Caco-2 (cell line): ENCODE measurements at regions of chr6 and their contacts with region 1.

Region 1: DNA sequence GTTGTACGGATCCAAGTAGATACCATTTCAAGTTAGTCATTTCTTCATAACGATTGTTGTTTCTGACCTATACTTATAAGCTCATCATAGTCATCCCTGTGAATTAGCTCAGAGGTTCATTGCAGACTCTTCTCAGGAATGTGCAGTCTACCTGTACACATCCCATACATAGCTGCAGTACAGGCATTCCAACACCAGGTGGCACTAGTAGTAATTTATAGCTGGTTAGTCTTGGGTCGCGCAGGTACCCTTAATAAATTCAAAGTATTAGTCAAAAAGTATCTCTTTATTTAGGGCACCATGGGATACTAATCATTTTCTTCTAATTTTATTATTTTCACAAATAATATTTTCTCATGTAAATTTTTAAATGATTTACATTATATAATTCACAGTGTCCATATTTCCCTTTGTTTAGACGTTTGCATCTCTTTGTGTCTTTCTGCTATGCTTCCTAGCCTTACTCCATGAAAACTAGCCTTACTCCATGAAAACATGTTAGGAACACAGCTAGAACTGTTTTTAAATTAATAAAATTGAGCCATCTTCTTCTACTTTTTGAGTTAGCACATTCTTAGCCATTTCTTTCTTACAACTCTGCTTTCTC is 128.6 kb upstream of the FAM83B start:
- DNase-seq: peak; percentile 78 to 82
- H3K4me3 ChIP-seq: no peak overlapping the region
- H3K4me3 Mint-ChIP-seq: no peak overlapping the region
- H3K27ac Mint-ChIP-seq: no peak overlapping the region
- H3K4me1 ChIP-seq: no peaks in the 10 kb centered on the region
- H3K4me1 Mint-ChIP-seq: peaks cover 19% of the 10 kb centered on the region
- H3K27me3 ChIP-seq: no peaks in the 10 kb centered on the region
- H3K27me3 Mint-ChIP-seq: no peaks in the 10 kb centered on the region
- CTCF ChIP-seq: peak; percentile 69 to 74

Region 2: GRCh38 chr6:54515013-54515412 is 202.9 kb before region 1 on chr6:
- CTCF ChIA-PET with region 1: no interaction called
- POLR2A ChIA-PET with region 1: no interaction called
- intact Hi-C with region 1: loop called (anchors 10 kb)
- DNase-seq: peak in 1 of 2 experiments; percentile 7
- H3K4me3 ChIP-seq: no peak overlapping the region
- H3K4me3 Mint-ChIP-seq: no peak overlapping the region
- H3K27ac Mint-ChIP-seq: no peak overlapping the region
- H3K4me1 ChIP-seq: no peaks in the 10 kb centered on the region
- H3K4me1 Mint-ChIP-seq: no peaks in the 10 kb centered on the region
- H3K27me3 ChIP-seq: no peaks in the 10 kb centered on the region
- H3K27me3 Mint-ChIP-seq: no peaks in the 10 kb centered on the region
- CTCF ChIP-seq: no peak

Region 3: GRCh38 chr6:54665278-54665677 is 52.7 kb before region 1 on chr6:
- CTCF ChIA-PET with region 1: no interaction called
- POLR2A ChIA-PET with region 1: no interaction called
- intact Hi-C with region 1: no loop called
- DNase-seq: no peak
- H3K4me3 ChIP-seq: no peak overlapping the region
- H3K4me3 Mint-ChIP-seq: no peak overlapping the region
- H3K27ac Mint-ChIP-seq: no peak overlapping the region
- H3K4me1 ChIP-seq: no peaks in the 10 kb centered on the region
- H3K4me1 Mint-ChIP-seq: no peaks in the 10 kb centered on the region
- H3K27me3 ChIP-seq: no peaks in the 10 kb centered on the region
- H3K27me3 Mint-ChIP-seq: no peaks in the 10 kb centered on the region
- CTCF ChIP-seq: no peak

Region 4: DNA sequence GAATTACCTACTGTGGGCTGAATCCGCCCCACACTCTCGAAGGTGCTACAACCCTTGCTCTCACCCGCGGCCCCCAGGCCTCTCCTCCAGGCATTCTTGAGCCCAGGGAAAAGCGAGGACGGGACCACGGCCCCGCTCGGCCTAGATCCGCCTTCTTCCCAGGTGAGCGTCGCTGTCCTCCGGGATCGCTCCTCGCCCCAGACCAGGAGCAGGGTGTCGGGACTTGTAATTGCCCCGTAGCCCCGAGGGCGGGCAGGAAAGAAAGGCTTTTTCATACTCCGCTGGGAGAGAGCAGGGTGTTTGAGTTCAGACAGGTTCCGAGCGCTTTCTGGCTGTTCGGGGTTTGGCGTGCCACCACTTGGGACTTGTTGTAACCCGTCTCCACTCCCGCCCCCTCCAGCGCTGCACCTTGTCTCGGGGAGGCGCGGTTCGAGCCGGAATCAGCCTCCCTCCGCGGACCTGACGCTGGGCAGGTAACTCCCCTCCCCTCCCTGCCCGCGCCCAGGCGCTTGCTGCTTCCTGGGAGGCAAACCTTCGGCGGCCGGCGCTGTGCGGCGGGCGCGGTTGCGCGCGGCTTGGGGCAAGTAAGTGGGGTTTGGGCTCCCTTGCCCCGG is 128.4 kb after region 1 on chr6 and contains the start of gene FAM83B:
- CTCF ChIA-PET with region 1: interaction called, 4 read pairs
- POLR2A ChIA-PET with region 1: no interaction called
- intact Hi-C with region 1: loop called (anchors 2 kb)
- DNase-seq: peak; percentile 84 to 87
- H3K4me3 ChIP-seq: peak within 1 kb of the TSS; percentile 43
- H3K4me3 Mint-ChIP-seq: peak within 1 kb of the TSS; percentile 98
- H3K27ac Mint-ChIP-seq: peak within 1 kb of the TSS; percentile 93
- H3K4me1 ChIP-seq: peaks cover 22% of the 10 kb centered on the region
- H3K4me1 Mint-ChIP-seq: peaks cover 33% of the 10 kb centered on the region
- H3K27me3 ChIP-seq: no peaks in the 10 kb centered on the region
- H3K27me3 Mint-ChIP-seq: no peaks in the 10 kb centered on the region
- CTCF ChIP-seq: no peak
- total RNA-seq, gene FAM83B: 16.9 and 21.1 TPM in 2 replicates

Region 5: DNA sequence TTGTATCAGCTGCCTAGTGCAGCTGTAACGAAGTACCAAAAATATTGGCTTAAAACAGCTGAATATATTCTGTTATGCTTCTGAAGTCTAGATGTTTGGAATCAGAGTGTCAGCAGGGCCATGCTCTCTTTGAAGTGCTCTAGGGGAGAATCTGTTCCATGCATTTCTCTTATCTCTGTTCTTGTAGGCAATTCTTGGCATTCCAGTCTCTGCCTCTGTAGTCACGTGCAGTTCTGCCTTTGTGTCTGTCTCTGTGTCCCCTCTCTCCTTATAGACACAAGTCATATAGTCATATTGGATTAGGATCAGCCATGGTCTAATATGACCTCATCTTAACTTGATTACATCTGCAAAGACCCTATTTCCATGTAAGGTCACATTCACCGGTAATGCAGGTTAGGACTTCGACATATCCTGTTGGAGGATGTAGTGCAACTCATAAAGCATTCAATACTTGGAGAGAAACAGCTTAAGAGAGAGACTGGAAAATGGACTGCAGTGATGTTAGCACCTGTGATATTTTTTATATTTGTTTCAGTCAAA is 147.2 kb after region 1 on chr6:
- CTCF ChIA-PET with region 1: no interaction called
- POLR2A ChIA-PET with region 1: no interaction called
- intact Hi-C with region 1: loop called (anchors 5 kb)
- DNase-seq: peak; percentile 69 to 79
- H3K4me3 ChIP-seq: no peak overlapping the region
- H3K4me3 Mint-ChIP-seq: peak overlapping the region; percentile 54
- H3K27ac Mint-ChIP-seq: peak overlapping the region; percentile 80
- H3K4me1 ChIP-seq: peaks cover 84% of the 10 kb centered on the region
- H3K4me1 Mint-ChIP-seq: peaks cover 32% of the 10 kb centered on the region
- H3K27me3 ChIP-seq: no peaks in the 10 kb centered on the region
- H3K27me3 Mint-ChIP-seq: no peaks in the 10 kb centered on the region
- CTCF ChIP-seq: no peak

Region 6: GRCh38 chr6:54992789-54993188 is 274.8 kb after region 1 on chr6:
- CTCF ChIA-PET with region 1: interaction called, 4 read pairs
- POLR2A ChIA-PET with region 1: no interaction called
- intact Hi-C with region 1: loop called (anchors 1 kb)
- DNase-seq: peak in 1 of 2 experiments; percentile 18
- H3K4me3 ChIP-seq: no peak overlapping the region
- H3K4me3 Mint-ChIP-seq: no peak overlapping the region
- H3K27ac Mint-ChIP-seq: no peak overlapping the region
- H3K4me1 ChIP-seq: peaks cover 5% of the 10 kb centered on the region; the same call in 1 of the 2 replicates
- H3K4me1 Mint-ChIP-seq: no peaks in the 10 kb centered on the region
- H3K27me3 ChIP-seq: no peaks in the 10 kb centered on the region
- H3K27me3 Mint-ChIP-seq: no peaks in the 10 kb centered on the region
- CTCF ChIP-seq: peak; percentile 45 to 51

Region 7: GRCh38 chr6:55069132-55069781 is 351.3 kb after region 1 on chr6:
- CTCF ChIA-PET with region 1: interaction called, 14 read pairs
- POLR2A ChIA-PET with region 1: no interaction called
- intact Hi-C with region 1: loop called (anchors 1 kb)
- DNase-seq: peak in 1 of 2 experiments; percentile 55
- H3K4me3 ChIP-seq: no peak overlapping the region
- H3K4me3 Mint-ChIP-seq: no peak overlapping the region
- H3K27ac Mint-ChIP-seq: no peak overlapping the region
- H3K4me1 ChIP-seq: no peaks in the 10 kb centered on the region
- H3K4me1 Mint-ChIP-seq: peaks cover 6% of the 10 kb centered on the region
- H3K27me3 ChIP-seq: no peaks in the 10 kb centered on the region
- H3K27me3 Mint-ChIP-seq: peaks cover 4% of the 10 kb centered on the region
- CTCF ChIP-seq: peak; percentile 60 to 74

Region 8: DNA sequence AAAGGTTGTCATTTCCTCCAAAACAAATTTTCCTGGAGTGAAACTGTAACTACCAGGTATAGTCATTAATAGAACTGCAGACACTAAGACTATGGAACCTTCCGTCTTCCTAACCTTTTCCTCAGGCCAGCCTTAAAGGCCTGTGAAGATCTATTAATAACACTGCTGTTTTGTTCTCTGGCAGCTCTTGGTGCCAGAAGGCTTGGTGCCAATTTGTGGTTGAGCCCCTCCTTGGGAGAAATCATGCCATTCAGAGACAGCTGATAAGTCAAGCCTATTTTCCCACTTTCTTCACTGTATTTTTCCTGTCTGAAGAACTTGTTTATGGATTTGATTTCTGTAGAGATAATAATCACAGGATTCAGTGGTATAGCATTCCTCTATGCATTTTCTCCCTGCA is 521.1 kb after region 1 on chr6:
- CTCF ChIA-PET with region 1: no interaction called
- POLR2A ChIA-PET with region 1: no interaction called
- intact Hi-C with region 1: loop called (anchors 5 kb)
- DNase-seq: no peak
- H3K4me3 ChIP-seq: no peak overlapping the region
- H3K4me3 Mint-ChIP-seq: no peak overlapping the region
- H3K27ac Mint-ChIP-seq: no peak overlapping the region
- H3K4me1 ChIP-seq: no peaks in the 10 kb centered on the region
- H3K4me1 Mint-ChIP-seq: peaks cover 5% of the 10 kb centered on the region
- H3K27me3 ChIP-seq: no peaks in the 10 kb centered on the region
- H3K27me3 Mint-ChIP-seq: no peaks in the 10 kb centered on the region
- CTCF ChIP-seq: no peak